Activated T-helper 1 cell treated with anti-CD3 and anti-CD28 coated beads, Interleukin-12 subunit alpha, Interleukin-12 subunit beta, Interleukin-2, Interleukin-4 antibody, amounts not matched to agents 30 ng/mL and 10 ng/mL and 1 ng/mL, durations not matched to agents 14 hours and 24 hours and 36 hours (primary cell): ENCODE measurements at regions of chr2 and their contacts with region 1.

Region 1: GRCh38 chr2:240434728-240435456 is 571 bp upstream of the GPC1 start:
- DNase-seq: peak; percentile 88
- H3K4me3 Mint-ChIP-seq: peak overlapping the region; percentile 83
- H3K27ac Mint-ChIP-seq: peak overlapping the region; percentile 61
- H3K4me1 Mint-ChIP-seq: no peaks in the 10 kb centered on the region
- H3K27me3 Mint-ChIP-seq: peaks cover 13% of the 10 kb centered on the region

Region 2: DNA sequence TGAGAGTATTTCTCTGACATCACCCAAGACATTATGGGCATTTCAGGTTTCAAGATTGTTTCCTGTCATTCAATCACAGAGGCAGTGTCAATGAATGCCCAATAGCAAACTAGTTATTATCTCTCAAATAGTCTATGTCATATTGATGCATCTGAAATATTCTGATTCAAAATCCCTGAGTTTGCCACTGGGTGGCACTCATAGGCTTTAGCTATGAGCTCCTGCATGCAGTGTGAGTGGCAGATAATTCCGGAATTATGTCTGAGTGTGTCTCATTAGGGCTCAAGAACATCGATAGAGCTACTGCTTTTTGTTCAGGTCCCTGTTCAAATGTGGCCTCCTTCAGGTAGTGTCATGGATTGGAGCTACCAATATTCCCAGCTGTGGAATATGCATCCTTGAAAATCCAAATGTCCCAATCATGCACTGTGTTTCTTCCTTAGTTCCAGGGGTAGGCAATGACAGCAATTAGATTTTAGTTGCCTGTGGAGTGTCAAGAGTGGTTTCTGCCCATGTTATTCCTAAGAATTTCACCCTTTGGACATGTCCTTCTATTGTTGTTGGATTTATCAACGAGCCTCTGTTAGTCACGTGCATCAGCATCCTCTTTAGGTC is 373.8 kb before region 1 on chr2:
- intact Hi-C with region 1: loop called (anchors 1 kb)
- DNase-seq: no peak
- H3K4me3 Mint-ChIP-seq: no peak overlapping the region
- H3K27ac Mint-ChIP-seq: no peak overlapping the region
- H3K4me1 Mint-ChIP-seq: no peaks in the 10 kb centered on the region
- H3K27me3 Mint-ChIP-seq: peaks cover 34% of the 10 kb centered on the region

Region 3: GRCh38 chr2:240232961-240233893 is 201.7 kb before region 1 on chr2:
- intact Hi-C with region 1: loop called (anchors 1 kb)
- DNase-seq: peak; percentile 52
- H3K4me3 Mint-ChIP-seq: no peak overlapping the region
- H3K27ac Mint-ChIP-seq: no peak overlapping the region
- H3K4me1 Mint-ChIP-seq: no peaks in the 10 kb centered on the region
- H3K27me3 Mint-ChIP-seq: no peaks in the 10 kb centered on the region

Region 4: GRCh38 chr2:240401781-240402551 is 32.9 kb before region 1 on chr2:
- intact Hi-C with region 1: loop called (anchors 2 kb)
- DNase-seq: no peak
- H3K4me3 Mint-ChIP-seq: no peak overlapping the region
- H3K27ac Mint-ChIP-seq: peak overlapping the region; percentile 29
- H3K4me1 Mint-ChIP-seq: peaks cover 13% of the 10 kb centered on the region
- H3K27me3 Mint-ChIP-seq: no peaks in the 10 kb centered on the region

Region 5: DNA sequence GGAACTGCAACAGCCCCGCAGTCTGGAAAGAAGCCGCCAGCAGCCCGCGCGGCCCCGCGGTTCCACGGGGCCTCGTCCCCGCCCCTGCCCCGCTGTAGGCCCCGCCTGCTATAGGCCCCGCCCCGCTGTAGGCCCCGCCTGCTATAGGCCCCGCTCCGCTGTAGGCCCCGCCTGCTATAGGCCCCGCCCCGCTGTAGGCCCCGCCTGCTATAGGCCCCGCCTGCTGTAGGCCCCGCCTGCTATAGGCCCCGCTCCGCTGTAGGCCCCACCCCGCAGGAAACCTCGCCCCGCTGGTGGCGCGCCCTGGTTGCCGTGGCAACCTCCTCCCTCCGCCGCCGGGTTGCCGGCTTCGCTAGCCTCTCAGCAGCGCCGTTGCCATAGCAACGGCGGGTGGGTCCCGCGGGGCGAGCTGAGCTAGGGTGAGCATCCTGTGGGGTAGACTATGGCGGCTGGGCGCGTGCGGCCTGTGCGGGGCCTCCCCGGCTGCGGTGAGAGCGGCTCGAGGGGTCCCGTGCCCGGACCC is 397.4 kb after region 1 on chr2:
- intact Hi-C with region 1: loop called (anchors 1 kb)
- DNase-seq: peak; percentile 97
- H3K4me3 Mint-ChIP-seq: no peak overlapping the region
- H3K27ac Mint-ChIP-seq: no peak overlapping the region
- H3K4me1 Mint-ChIP-seq: no peaks in the 10 kb centered on the region
- H3K27me3 Mint-ChIP-seq: peaks cover 27% of the 10 kb centered on the region